CD14-positive monocyte (primary cell): ENCODE measurements at regions of chr22 and their contacts with region 1.

Region 1: GRCh38 chr22:45994491-45995404 is 17.8 kb upstream of the WNT7B start:
- DNase-seq: peak; percentile 67 to 76 (median 73)
- H3K4me3 ChIP-seq: peak overlapping the region in 1 of 3 experiments; percentile 9
- H3K4me3 Mint-ChIP-seq: peak overlapping the region in 1 of 2 donors; percentile 46
- H3K27ac ChIP-seq: peak overlapping the region in 1 of 2 donors; percentile 94
- H3K27ac Mint-ChIP-seq: peak overlapping the region; percentile 74 to 99 (median 98)
- H3K4me1 ChIP-seq: peaks cover 50 to 53% of the 10 kb centered on the region in 2 donors
- H3K4me1 Mint-ChIP-seq: peaks cover 52% of the 10 kb centered on the region
- H3K27me3 ChIP-seq: no peaks in the 10 kb centered on the region
- H3K27me3 Mint-ChIP-seq: peaks cover 0 to 12% (median 2%) of the 10 kb centered on the region in 3 donors
- CTCF ChIP-seq: peak; percentile 99

Region 2: DNA sequence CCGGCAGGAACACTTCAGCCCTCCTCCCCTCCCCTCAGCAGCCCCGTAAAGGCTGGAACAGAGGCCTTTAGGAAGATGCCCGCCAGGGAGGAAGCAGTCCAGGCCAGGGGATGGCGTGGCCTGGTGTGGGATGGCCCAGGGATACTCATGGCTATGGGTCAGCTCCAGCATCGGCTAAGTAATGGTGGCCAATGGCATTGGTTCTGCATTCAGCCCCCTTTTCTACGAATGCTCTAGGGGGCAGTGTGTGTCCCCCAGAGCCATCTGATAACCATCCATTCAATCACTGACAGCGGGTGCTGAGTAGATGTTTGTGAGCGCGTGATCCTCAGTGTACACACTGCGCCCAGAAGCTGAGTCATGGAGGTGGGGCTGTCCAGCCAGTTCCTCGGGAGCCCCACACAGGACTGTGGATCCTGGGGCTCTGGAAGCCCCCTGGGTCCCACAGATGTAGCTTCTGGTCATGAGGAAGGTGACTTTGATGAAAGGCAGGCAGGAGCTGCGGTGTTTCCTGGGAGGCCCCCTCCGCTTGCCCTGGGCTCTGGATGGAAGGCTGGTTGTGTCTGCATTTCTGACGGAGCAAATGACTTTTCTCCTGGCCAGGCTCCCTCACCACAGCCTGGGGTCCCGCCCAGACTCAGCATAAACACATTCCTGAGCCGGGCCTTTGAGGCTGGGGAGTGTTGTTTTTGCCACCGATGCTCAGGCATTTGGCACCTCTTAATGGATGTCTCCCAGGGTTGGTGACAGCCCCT is 445.6 kb before region 1 on chr22:
- intact Hi-C with region 1: no loop called
- DNase-seq: no peak
- H3K4me3 ChIP-seq: no peak overlapping the region
- H3K4me3 Mint-ChIP-seq: no peak overlapping the region
- H3K27ac ChIP-seq: no peak overlapping the region
- H3K27ac Mint-ChIP-seq: no peak overlapping the region
- H3K4me1 ChIP-seq: peaks cover 0 to 11% of the 10 kb centered on the region in 2 donors
- H3K4me1 Mint-ChIP-seq: peaks cover 3% of the 10 kb centered on the region
- H3K27me3 ChIP-seq: peaks cover 0 to 1% of the 10 kb centered on the region in 2 donors
- H3K27me3 Mint-ChIP-seq: peaks cover 4 to 14% (median 7%) of the 10 kb centered on the region in 3 donors
- CTCF ChIP-seq: no peak

Region 3: GRCh38 chr22:46013460-46014416 is 19.0 kb after region 1 on chr22:
- intact Hi-C with region 1: loop called in 1 of 2 experiments (anchors 2 kb)
- DNase-seq: peak; percentile 93 to 96 (median 95)
- H3K4me3 ChIP-seq: peak overlapping the region; percentile 68 to 89 (median 89)
- H3K4me3 Mint-ChIP-seq: peak overlapping the region; percentile 90 to 95
- H3K27ac ChIP-seq: peak overlapping the region; percentile 93 to 97
- H3K27ac Mint-ChIP-seq: peak overlapping the region; percentile 89 to 97 (median 94)
- H3K4me1 ChIP-seq: peaks cover 22 to 27% of the 10 kb centered on the region in 2 donors
- H3K4me1 Mint-ChIP-seq: peaks cover 28% of the 10 kb centered on the region
- H3K27me3 ChIP-seq: no peaks in the 10 kb centered on the region
- H3K27me3 Mint-ChIP-seq: peaks cover 0 to 5% (median 4%) of the 10 kb centered on the region in 3 donors
- CTCF ChIP-seq: peak; percentile 81

Region 4: DNA sequence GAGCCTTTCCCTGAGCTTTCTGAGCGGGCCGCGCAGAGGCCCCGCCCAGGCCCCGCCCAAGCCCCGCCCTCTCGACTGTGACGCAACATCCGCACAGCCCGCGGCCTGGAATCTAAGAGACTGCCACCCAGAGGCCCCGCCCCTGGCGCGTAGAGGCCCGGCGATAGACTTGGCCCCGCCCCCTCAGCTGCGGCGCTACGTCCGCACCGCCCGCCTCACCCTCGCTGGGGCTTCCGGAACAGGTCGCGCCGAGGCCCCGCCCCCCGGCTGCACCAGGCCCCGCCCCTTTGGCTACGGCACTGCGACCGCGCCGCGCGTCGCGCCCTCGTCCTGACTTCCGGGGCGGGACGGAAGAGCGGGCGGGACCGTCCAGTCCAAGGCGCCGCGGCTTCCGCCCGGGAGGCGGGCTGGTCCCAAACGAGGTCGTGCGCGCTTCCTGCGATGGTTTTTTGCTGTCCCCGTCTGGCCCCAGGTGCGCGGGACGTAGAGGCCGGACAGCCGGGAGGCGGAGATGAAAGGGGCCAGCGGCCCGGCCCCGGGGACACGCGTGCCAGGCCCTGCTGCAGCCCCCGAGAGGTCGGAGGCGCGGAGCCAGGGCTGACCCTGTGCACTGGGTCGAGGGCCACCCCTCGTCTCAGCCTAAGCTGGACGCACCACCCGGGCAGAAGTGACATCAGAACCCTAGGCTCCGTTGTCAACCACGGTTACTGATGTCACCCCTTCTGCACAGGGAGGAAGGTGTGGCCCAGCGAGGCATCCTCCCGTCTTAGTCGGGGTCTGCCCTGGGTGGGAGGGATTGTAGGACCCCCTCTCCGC is 41.2 kb after region 1 on chr22:
- intact Hi-C with region 1: loop called (anchors 5 kb)
- DNase-seq: peak; percentile 99 to 100 (median 99)
- H3K4me3 ChIP-seq: peak overlapping the region; percentile 51 to 83 (median 67)
- H3K4me3 Mint-ChIP-seq: peak overlapping the region; percentile 76 to 89
- H3K27ac ChIP-seq: peak overlapping the region; percentile 73 to 96
- H3K27ac Mint-ChIP-seq: peak overlapping the region; percentile 90 to 95 (median 93)
- H3K4me1 ChIP-seq: peaks cover 24 to 41% of the 10 kb centered on the region in 2 donors
- H3K4me1 Mint-ChIP-seq: peaks cover 37% of the 10 kb centered on the region
- H3K27me3 ChIP-seq: no peaks in the 10 kb centered on the region
- H3K27me3 Mint-ChIP-seq: no peaks in the 10 kb centered on the region
- CTCF ChIP-seq: no peak

Region 5: GRCh38 chr22:46054091-46055073 is 59.6 kb after region 1 on chr22:
- intact Hi-C with region 1: loop called in 1 of 2 experiments (anchors 5 kb)
- DNase-seq: peak in 2 of 3 donors; percentile 45 to 47
- H3K4me3 ChIP-seq: peak overlapping the region; percentile 68 to 88 (median 76)
- H3K4me3 Mint-ChIP-seq: peak overlapping the region; percentile 89 to 93
- H3K27ac ChIP-seq: peak overlapping the region; percentile 83 to 87
- H3K27ac Mint-ChIP-seq: peak overlapping the region in 6 of 7 donors; percentile 77 to 92 (median 86)
- H3K4me1 ChIP-seq: peaks cover 76 to 87% of the 10 kb centered on the region in 2 donors
- H3K4me1 Mint-ChIP-seq: peaks cover 75% of the 10 kb centered on the region
- H3K27me3 ChIP-seq: no peaks in the 10 kb centered on the region
- H3K27me3 Mint-ChIP-seq: no peaks in the 10 kb centered on the region
- CTCF ChIP-seq: no peak

Region 6: GRCh38 chr22:46071451-46072109 is 76.8 kb after region 1 on chr22:
- intact Hi-C with region 1: loop called in 1 of 2 experiments (anchors 5 kb)
- DNase-seq: peak; percentile 4 to 40 (median 36)
- H3K4me3 ChIP-seq: peak overlapping the region; percentile 42 to 89 (median 72)
- H3K4me3 Mint-ChIP-seq: peak overlapping the region; percentile 89 to 91
- H3K27ac ChIP-seq: peak overlapping the region; percentile 42 to 81
- H3K27ac Mint-ChIP-seq: peak overlapping the region in 6 of 7 donors; percentile 74 to 91 (median 84)
- H3K4me1 ChIP-seq: peaks cover 44 to 70% of the 10 kb centered on the region in 2 donors
- H3K4me1 Mint-ChIP-seq: peaks cover 55% of the 10 kb centered on the region
- H3K27me3 ChIP-seq: no peaks in the 10 kb centered on the region
- H3K27me3 Mint-ChIP-seq: no peaks in the 10 kb centered on the region
- CTCF ChIP-seq: no peak

Region 7: DNA sequence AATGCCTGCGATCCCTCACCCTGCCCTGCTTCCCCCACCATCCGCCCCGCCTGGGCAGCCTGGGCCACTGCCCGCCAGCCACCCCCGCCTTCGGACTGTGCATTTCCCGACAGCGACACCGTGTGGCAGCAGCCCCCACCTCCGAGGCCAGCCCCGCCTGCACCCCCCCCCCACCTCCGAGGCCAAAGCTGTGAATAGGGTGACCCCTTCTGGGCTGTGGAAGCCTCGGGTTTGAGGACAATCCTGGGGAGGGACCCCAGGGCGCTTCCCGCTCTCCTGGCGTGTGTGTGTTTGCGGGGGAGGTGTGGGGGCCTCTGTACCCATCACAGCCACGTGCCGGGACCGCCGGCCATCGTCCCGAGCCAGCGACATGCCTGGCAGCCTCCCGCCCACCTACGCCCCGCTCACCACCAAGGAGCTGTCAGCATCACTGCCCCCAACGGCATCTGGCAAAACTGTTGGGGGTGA is 121.8 kb after region 1 on chr22:
- intact Hi-C with region 1: loop called (anchors 1 kb)
- DNase-seq: peak; percentile 87 to 90 (median 87)
- H3K4me3 ChIP-seq: no peak overlapping the region
- H3K4me3 Mint-ChIP-seq: no peak overlapping the region
- H3K27ac ChIP-seq: no peak overlapping the region
- H3K27ac Mint-ChIP-seq: no peak overlapping the region
- H3K4me1 ChIP-seq: peaks cover 8 to 22% of the 10 kb centered on the region in 2 donors
- H3K4me1 Mint-ChIP-seq: peaks cover 6% of the 10 kb centered on the region
- H3K27me3 ChIP-seq: no peaks in the 10 kb centered on the region
- H3K27me3 Mint-ChIP-seq: peaks cover 0 to 4% (median 3%) of the 10 kb centered on the region in 3 donors
- CTCF ChIP-seq: peak; percentile 80

Region 8: DNA sequence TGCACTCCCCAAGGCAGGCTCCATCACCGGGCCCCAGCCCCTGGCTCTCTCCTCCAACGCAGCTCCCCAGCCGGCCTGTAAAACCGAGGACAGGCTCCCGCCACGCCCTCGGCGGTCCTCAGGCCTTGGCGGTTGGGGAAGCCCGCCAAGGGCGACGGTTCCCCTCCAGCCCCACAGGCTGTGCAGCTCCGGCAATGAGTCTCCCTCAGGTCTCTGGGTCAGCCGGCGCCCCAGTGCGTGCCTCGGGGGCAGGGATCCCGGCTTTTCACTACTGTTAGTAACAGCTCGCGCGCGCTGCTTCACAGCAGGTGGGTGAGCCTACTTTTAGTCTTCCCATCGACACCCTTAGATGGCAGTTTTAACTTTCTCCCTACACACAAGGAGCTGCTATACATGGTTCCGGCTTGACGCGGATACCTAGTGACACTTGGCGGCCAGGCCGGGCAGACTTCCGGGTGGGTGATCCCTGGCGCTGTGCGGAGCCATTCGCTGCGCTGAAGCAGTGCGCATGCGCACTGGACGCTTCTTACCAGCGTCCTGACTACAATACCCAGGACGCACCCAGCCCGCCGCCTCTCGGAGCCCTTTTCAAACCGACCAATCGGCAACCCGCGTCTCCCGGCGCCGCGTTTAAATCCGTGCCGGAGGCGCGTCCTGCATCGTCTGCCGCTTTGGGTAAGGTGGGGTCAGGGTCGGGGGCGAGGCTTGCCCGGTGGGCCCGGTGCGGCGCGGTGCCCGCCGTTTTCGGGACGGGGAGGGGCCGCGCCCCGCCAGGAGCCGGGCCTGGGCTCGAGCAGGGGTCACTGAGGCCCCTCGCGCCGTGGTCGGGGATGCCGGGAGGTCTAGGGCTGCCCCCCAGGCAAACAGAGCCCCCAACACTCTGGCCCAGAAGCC is 301.8 kb after region 1 on chr22 and contains the start of gene GTSE1:
- intact Hi-C with region 1: loop called (anchors 10 kb)
- DNase-seq: peak; percentile 97 to 100 (median 99)
- H3K4me3 ChIP-seq: peak within 1 kb of the TSS; percentile 52 to 84 (median 74)
- H3K4me3 Mint-ChIP-seq: peak within 1 kb of the TSS; percentile 83 to 92
- H3K27ac ChIP-seq: peak within 1 kb of the TSS; percentile 90 to 96
- H3K27ac Mint-ChIP-seq: peak within 1 kb of the TSS; percentile 94 to 97 (median 96)
- H3K4me1 ChIP-seq: peaks cover 35 to 47% of the 10 kb centered on the region in 2 donors
- H3K4me1 Mint-ChIP-seq: peaks cover 49% of the 10 kb centered on the region
- H3K27me3 ChIP-seq: no peaks in the 10 kb centered on the region
- H3K27me3 Mint-ChIP-seq: no peaks in the 10 kb centered on the region
- CTCF ChIP-seq: no peak
- polyA plus RNA-seq, gene GTSE1: 0.04 TPM in 1 of 3 donors, not detected in the others